Heart left ventricle (tissue), 16 donors: ENCODE measurements at regions of chr15 and their contacts with region 1.

Region 1: GRCh38 chr15:42084460-42085235 is 9.7 kb downstream of the PLA2G4D start:
- DNase-seq: peak in 4 of 5 donors; percentile 54 to 83 (median 62)
- ATAC-seq: peak in 3 of 4 donors; percentile 80 to 88 (median 85)
- H3K4me3 ChIP-seq: no peak overlapping the region
- H3K27ac ChIP-seq: no peak overlapping the region
- H3K4me1 ChIP-seq: peaks cover 0 to 21% (median 1%) of the 10 kb centered on the region in 12 donors
- H3K27me3 ChIP-seq: peaks cover 0 to 20% (median 0%) of the 10 kb centered on the region in 9 donors
- CTCF ChIP-seq: peak; percentile 87 to 98 (median 94)
- POLR2A ChIP-seq: no peak

Region 2: GRCh38 chr15:41116116-41116871 is 968.4 kb before region 1 on chr15 and contains the start of gene INO80:
- intact Hi-C with region 1: no loop called
- DNase-seq: peak; percentile 97 to 100 (median 99)
- ATAC-seq: peak; percentile 95 to 98 (median 96)
- H3K4me3 ChIP-seq: peak within 1 kb of the TSS; percentile 72 to 98 (median 84)
- H3K27ac ChIP-seq: peak within 1 kb of the TSS; percentile 91 to 100 (median 100)
- H3K4me1 ChIP-seq: peaks cover 0 to 24% (median 18%) of the 10 kb centered on the region in 12 donors
- H3K27me3 ChIP-seq: no peaks in the 10 kb centered on the region
- CTCF ChIP-seq: peak in 1 of 12 donors; percentile 18
- POLR2A ChIP-seq: peak in 1 of 2 donors; percentile 77
- total RNA-seq, gene INO80: 9.7 to 20.9 (median 12.6) TPM

Region 3: DNA sequence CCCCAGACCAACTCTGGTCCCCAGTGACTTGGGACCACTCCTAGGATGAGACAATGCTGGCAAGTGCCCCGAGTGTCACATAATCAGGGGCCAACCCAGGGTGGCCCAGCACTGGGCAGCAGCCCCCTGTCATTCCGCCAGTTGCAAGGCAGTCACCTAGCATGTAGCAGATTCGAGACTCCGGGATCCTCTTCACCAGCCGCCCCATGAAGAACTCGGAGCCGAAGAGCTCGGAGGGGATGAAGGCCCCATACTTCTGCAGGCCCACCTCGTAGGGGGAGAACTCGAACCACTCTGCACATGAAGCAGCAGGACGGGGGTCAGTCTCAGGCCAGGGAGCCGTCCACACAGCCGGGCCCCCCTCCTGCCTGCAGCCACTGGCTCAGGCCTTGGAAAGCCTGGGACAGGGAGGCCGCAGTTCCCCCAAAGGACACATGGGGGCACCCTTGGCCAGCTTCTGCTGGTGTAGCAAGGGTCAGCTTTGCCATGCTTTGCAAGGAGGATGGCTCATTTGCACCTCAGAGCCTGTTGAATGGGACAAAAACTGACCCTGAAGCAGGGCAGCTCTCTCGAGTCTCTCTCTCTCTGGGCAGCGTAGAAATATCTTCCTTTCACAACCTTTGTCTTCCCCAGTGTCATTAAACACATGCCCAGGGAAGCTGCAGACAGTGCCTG is 95.3 kb before region 1 on chr15:
- intact Hi-C with region 1: loop called in 2 of 10 experiments (anchors 1 to 5 kb)
- DNase-seq: peak; percentile 77 to 91 (median 83)
- ATAC-seq: peak; percentile 65 to 91 (median 89)
- H3K4me3 ChIP-seq: no peak overlapping the region
- H3K27ac ChIP-seq: no peak overlapping the region
- H3K4me1 ChIP-seq: peaks cover 0 to 10% (median 0%) of the 10 kb centered on the region in 12 donors
- H3K27me3 ChIP-seq: no peaks in the 10 kb centered on the region
- CTCF ChIP-seq: peak; percentile 96 to 100 (median 98)
- POLR2A ChIP-seq: no peak

Region 4: GRCh38 chr15:42065033-42065432 is 19.6 kb before region 1 on chr15:
- intact Hi-C with region 1: loop called in 2 of 10 experiments (anchors 1 to 2 kb)
- DNase-seq: peak in 1 of 5 donors; percentile 66
- ATAC-seq: peak in 3 of 4 donors; percentile 13 to 60 (median 21)
- H3K4me3 ChIP-seq: no peak overlapping the region
- H3K27ac ChIP-seq: no peak overlapping the region
- H3K4me1 ChIP-seq: peaks cover 0 to 4% (median 0%) of the 10 kb centered on the region in 12 donors
- H3K27me3 ChIP-seq: no peaks in the 10 kb centered on the region
- CTCF ChIP-seq: no peak
- POLR2A ChIP-seq: no peak

Region 5: DNA sequence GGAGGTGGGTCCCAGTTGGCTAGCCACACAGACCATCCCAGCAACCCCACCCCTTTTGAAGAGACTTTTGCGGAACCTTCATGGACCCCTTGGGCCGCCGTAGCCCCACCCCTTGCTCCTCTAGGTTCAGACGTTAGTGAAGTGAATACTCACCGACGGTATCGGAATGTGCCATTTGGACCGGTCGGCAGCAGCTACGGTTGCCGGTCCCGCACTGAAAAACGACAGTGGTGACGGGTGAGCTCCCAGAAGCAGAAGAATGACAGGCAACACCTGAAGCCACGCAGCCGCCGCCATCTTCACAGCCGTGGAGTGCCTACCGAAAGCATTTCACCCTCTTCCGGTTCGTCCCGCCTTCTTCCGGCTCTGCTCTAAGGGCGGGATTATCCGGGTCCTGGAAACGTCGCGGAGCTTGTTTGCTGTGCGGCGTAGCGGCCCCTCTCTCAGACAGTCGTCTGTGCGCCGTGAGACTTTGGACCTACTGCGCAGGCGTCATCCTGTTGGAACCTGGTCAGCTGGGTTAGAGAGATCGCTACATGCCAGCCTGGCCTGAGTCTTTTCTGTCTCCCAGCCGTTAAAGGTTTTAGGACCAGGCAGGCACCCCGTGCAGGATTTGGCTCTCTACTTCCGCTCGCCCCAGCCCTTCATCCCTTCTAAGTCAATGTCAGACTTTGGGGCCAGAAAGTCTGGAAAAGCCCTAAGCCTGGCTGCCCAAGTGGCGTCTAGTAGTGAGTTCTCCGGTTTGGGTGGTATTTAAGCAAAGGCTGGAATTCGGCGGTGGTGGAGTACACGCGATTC is 188.7 kb after region 1 on chr15 and contains the starts of genes GANC and TMEM87A:
- intact Hi-C with region 1: no loop called
- DNase-seq: peak; percentile 97 to 98 (median 98)
- ATAC-seq: peak; percentile 98 to 99 (median 98)
- H3K4me3 ChIP-seq: peak within 1 kb of the TSS; percentile 61 to 84 (median 68)
- H3K27ac ChIP-seq: peak within 1 kb of the TSS; percentile 90 to 99 (median 96)
- H3K4me1 ChIP-seq: peaks cover 11 to 57% (median 39%) of the 10 kb centered on the region in 12 donors
- H3K27me3 ChIP-seq: no peaks in the 10 kb centered on the region
- CTCF ChIP-seq: peak in 1 of 12 donors; percentile 14
- POLR2A ChIP-seq: peak in 1 of 2 donors; percentile 71
- total RNA-seq, gene GANC: 8.8 to 30.2 (median 17.4) TPM
- total RNA-seq, gene TMEM87A: 17.2 to 30.8 (median 19.9) TPM